BJ (cell line): ENCODE measurements at regions of chr10 and their contacts with region 1.

Region 1: DNA sequence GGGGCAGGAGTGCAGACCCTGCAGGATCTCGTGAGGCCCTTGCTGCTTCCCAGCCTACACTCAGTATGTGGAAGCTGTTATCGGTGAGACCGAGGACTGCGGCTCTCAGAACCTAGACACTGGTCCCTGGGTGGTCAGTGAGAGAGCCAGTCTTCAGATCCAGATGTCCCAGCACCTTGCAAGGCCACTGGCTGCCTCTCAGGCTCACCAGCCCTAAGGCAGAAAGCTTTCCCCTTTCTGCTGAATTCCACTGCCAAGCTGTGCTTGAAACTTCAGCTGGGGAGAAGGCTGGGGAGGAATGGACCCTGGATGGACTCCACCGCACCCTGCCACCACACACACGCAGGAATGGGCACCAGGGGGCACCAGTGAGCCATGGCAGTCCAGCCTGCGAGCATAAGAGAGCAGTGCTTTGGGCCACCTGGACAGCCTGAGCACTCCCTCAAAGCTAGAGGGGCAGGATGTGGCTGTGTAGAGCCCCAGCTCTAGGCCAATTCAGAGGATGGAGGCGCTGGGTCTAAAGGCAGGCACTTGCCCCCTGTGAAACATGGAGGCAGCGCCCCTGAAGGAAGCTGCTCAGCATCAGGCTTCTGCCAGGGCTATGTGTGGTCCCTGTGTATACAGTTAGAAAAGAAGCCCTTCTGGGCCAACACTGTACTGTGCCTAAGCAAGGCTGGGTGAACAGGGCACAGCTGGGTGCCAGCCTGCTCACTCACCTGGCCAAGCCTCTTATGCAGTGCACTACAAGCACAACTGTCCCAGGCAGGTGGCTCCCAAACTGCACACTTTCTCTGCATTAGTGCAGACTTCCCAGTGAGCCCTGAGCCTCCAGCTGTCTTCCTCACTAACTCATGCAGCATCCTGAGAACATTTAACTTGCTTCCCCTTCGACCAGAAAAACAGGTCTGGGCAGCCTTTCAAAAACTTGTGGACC is 21.6 kb downstream of the TMEM72 start:
- DNase-seq: no peak
- H3K4me3 ChIP-seq: no peak overlapping the region
- H3K27me3 ChIP-seq: peaks cover 5% of the 10 kb centered on the region
- CTCF ChIP-seq: peak; percentile 98

Region 2: GRCh38 chr10:44947371-44948152 is 14.8 kb after region 1 on chr10:
- CTCF ChIA-PET with region 1: interaction called, 30 read pairs
- POLR2A ChIA-PET with region 1: no interaction called
- DNase-seq: no peak
- H3K4me3 ChIP-seq: no peak overlapping the region
- H3K27me3 ChIP-seq: no peaks in the 10 kb centered on the region
- CTCF ChIP-seq: no peak

Region 3: DNA sequence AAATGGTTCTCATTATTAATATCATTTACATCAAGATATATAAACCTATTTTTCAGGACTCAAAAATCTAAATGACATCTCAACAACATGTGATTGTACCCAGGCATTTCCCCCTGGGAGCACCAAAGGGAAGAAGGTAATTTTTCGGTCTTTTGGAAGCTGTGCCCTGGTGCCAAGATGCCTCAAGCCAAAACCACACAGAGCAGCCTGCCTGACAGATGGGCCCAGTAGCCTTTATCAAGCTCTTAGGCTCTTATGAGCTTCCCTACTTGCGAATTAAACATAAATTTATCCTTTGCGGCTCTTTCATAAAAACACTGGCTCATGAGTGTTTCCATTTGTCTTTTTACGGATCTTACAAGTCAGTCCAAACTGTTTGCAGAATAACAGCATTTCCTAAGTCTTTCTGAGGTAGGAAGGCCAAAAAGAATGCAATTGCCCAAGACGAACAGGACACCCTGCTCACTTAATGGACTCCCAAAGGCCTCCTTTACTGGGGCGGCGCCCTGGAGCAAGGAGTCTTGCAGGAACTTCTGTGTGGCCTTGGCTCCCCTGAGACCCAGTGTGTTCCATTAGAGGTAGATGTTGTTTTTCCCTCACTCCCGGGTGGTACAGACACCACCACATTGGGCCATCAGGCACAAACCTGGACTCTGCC is 22.8 kb after region 1 on chr10:
- CTCF ChIA-PET with region 1: interaction called, 87 read pairs
- POLR2A ChIA-PET with region 1: no interaction called
- DNase-seq: no peak
- H3K4me3 ChIP-seq: no peak overlapping the region
- H3K27me3 ChIP-seq: no peaks in the 10 kb centered on the region
- CTCF ChIP-seq: no peak

Region 4: DNA sequence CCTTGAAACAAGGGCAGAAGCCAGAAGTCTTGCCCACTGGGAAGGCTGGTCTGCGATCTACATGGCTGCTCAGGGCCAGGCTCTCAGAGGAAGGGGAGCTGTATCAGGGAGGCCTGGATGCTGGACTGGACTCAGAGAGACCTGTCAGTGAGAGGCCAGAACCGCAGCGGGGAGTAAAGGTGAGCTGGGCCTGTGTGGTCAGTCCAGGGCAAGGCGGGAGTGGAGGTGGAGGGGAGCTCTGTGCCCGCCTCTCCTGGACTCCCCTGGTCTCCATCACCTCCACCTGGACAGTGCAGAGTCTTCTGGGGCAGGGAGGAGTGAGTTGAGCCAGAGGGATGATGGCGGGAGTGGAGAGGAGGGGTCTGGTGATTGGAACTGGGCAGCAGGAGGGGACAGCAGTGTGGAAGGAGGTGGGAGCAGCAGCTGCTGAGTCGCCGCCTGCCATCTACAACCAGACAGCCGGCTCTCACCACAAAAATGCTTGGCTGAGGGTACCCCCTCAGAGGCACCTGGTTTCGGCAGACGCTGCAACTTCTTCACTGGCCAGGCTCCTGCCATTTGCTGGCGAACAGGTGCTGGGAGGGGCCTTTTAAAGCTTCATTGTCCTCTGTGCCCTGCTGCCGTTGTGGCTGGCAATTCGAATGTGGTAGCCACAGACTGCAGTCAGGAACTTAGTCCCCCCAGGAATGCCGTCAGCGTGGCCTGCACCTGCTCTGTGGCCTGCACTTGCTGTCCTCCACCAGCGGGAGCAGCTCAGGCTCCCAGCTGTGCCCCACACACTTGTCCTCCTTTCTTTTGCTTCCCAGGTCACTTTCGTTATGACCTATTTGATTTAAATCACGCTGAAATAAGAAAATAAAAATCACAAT is 30.3 kb after region 1 on chr10:
- CTCF ChIA-PET with region 1: interaction called, 87 read pairs
- POLR2A ChIA-PET with region 1: no interaction called
- DNase-seq: no peak
- H3K4me3 ChIP-seq: no peak overlapping the region
- H3K27me3 ChIP-seq: no peaks in the 10 kb centered on the region
- CTCF ChIP-seq: 0 out of 2 replicates have a peak, but pooled peaks have one; percentile 30

Region 5: GRCh38 chr10:44974628-44975431 is 42.0 kb after region 1 on chr10:
- CTCF ChIA-PET with region 1: interaction called, 87 read pairs
- POLR2A ChIA-PET with region 1: no interaction called
- DNase-seq: no peak
- H3K4me3 ChIP-seq: peak overlapping the region; percentile 37
- H3K27me3 ChIP-seq: no peaks in the 10 kb centered on the region
- CTCF ChIP-seq: peak; percentile 71

Region 6: DNA sequence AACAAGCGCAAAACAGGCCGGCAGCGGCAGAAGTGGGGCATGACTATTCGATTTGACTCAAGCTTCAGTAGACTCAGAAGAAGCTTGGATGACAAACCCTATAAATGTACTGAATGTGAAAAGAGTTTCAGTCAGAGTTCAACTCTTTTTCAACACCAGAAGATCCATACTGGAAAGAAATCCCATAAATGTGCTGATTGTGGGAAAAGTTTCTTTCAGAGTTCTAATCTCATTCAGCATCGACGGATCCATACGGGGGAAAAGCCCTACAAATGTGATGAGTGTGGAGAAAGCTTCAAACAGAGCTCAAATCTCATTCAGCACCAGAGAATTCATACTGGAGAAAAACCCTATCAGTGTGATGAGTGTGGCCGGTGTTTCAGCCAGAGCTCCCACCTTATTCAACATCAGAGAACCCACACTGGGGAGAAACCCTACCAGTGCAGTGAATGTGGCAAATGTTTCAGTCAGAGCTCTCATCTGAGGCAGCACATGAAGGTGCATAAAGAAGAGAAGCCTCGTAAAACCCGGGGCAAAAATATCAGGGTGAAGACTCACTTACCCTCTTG is 70.7 kb after region 1 on chr10:
- CTCF ChIA-PET with region 1: interaction called, 12 read pairs
- POLR2A ChIA-PET with region 1: no interaction called
- DNase-seq: no peak
- H3K4me3 ChIP-seq: no peak overlapping the region
- H3K27me3 ChIP-seq: no peaks in the 10 kb centered on the region
- CTCF ChIP-seq: no peak

Region 7: DNA sequence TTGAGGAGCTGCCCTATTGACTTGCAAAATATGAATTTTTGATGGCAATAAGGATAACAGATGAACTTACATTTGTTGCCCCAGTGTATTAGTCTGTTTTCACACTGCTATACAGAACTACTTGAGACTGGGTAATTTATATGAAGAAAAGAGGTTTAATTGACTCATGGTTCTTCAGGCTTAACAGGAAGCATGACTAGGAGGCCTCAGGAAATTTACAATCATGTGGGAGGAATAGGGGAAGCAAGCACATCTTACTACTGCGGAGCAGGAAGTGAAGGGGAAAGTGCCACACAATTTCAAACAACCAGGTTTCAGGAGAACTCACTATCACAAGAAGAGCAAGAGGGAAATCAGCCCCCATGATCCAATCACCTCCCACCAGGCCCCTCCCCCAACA is 125.8 kb after region 1 on chr10:
- CTCF ChIA-PET with region 1: no interaction called
- POLR2A ChIA-PET with region 1: no interaction called
- DNase-seq: no peak
- H3K4me3 ChIP-seq: no peak overlapping the region
- H3K27me3 ChIP-seq: no peaks in the 10 kb centered on the region
- CTCF ChIP-seq: no peak